ENCODE measurements at regions of chr10 and their contacts with region 1.

Region 1: DNA sequence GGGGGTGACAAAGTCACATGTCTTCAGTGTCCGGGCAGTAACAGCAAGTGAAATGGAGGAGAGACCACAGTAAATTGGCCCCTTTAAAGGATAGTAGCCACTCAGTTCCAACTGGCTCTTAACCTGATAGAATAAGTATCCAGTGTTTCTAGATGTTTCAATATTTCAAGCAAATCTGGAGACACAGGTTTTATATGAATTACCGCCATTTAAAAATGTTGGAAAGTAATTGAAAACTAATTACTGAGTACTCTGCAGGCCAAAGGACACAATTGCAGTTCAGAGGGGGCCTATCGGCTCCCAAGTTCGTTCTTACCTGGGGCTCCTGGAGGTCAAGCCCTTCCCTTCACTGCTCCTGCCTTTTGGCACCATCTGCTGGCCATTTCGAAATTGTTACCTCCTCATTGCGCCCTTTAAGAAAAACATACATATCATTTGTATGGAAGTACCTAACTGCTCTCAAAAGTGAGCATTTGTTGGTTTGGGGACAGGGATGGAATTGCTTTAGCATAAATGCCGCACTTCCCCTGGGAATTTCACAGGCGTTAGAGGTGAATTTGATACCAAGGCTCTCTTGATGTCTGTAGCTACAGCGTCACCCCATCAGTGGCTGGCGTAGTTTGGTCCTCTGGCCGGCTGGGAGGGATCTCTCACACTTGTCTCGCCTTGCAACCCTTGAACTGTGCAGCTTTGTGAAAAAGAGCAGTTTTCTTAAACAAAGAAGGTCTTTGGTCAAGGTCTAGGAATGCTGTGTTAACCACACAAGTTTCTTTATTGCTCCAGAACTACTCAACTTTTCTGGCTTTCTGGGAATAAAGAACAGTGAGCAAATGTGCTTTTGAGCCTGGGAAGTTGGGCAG is 220.0 kb downstream of the ARHGAP21 start:
- DNase-seq: no peak
- ATAC-seq: peak; percentile 76 to 86 (median 80)
- H3K4me3 ChIP-seq: no peak overlapping the region
- H3K27ac ChIP-seq: no peak overlapping the region
- H3K4me1 ChIP-seq: no peaks in the 10 kb centered on the region
- H3K27me3 ChIP-seq: no peaks in the 10 kb centered on the region
- CTCF ChIP-seq: peak; percentile 56 to 67 (median 61)
- POLR2A ChIP-seq: no peak

Region 2: GRCh38 chr10:24385776-24386175 is 117.9 kb before region 1 on chr10:
- intact Hi-C with region 1: no loop called
- DNase-seq: no peak
- ATAC-seq: no peak
- H3K4me3 ChIP-seq: no peak overlapping the region
- H3K27ac ChIP-seq: no peak overlapping the region
- H3K4me1 ChIP-seq: no peaks in the 10 kb centered on the region
- H3K27me3 ChIP-seq: no peaks in the 10 kb centered on the region
- CTCF ChIP-seq: no peak
- POLR2A ChIP-seq: no peak

Region 3: GRCh38 chr10:24419066-24419465 is 84.6 kb before region 1 on chr10:
- intact Hi-C with region 1: loop called in 1 of 2 experiments (anchors 2 kb)
- DNase-seq: no peak
- ATAC-seq: peak in 2 of 4 donors; percentile 28 to 29
- H3K4me3 ChIP-seq: no peak overlapping the region
- H3K27ac ChIP-seq: no peak overlapping the region
- H3K4me1 ChIP-seq: no peaks in the 10 kb centered on the region
- H3K27me3 ChIP-seq: no peaks in the 10 kb centered on the region
- CTCF ChIP-seq: no peak
- POLR2A ChIP-seq: no peak

Region 4: DNA sequence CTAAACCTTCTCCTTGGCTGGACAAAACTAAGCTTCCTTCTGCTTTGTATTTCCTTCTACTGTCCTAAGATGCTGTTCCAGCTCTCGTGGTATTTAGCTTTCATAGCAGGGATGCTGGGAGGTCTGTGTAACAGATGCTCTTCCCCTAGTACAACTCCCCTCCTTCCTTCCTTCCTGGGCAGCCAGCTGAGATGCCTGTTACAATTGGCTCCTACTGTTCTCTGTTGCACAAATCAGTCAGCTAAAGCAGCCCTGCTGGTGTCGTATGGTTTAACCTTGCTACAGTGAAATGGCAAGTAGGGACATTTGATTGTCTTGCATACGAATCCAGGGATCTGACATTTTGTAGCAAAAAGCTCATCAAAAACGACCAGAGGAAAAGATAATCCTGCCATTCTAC is 76.2 kb after region 1 on chr10:
- intact Hi-C with region 1: no loop called
- DNase-seq: no peak
- ATAC-seq: no peak
- H3K4me3 ChIP-seq: no peak overlapping the region
- H3K27ac ChIP-seq: no peak overlapping the region
- H3K4me1 ChIP-seq: no peaks in the 10 kb centered on the region
- H3K27me3 ChIP-seq: no peaks in the 10 kb centered on the region
- CTCF ChIP-seq: no peak
- POLR2A ChIP-seq: no peak

Measured in right lobe of liver (tissue), 6 donors.